Right ventricle myocardium superior (tissue), 1 donor: ENCODE measurements at regions of chr1 and their contacts with region 1.

Region 1: GRCh38 chr1:24415334-24415909 is at the start of gene NIPAL3:
- DNase-seq: peak; percentile 98
- ATAC-seq: peak; percentile 95
- total RNA-seq, gene NIPAL3: 31.8 TPM

Region 2: GRCh38 chr1:24119859-24120756 is 295.3 kb before region 1 on chr1:
- intact Hi-C with region 1: no loop called
- DNase-seq: peak; percentile 71
- ATAC-seq: peak; percentile 87

Region 3: DNA sequence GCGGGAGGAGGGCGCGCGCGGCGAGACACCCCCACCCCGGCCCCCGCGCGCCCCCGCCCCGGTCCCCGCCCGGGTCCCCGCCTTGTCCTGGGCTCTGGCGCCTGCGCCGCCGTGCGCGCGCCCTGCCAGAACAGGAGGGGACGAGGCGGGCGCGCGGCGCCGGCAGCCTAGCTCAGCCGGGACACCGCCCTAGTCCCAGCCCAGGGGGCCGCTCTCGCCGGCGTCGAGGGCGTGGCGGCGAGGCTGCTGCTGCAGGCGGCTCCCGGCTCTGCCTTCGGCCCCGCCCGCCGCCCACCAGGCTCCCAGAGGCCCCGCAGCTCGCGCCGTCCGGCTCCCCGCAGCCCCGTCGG is 87.3 kb after region 1 on chr1 and contains the start of gene RCAN3:
- intact Hi-C with region 1: loop called (anchors 5 kb)
- DNase-seq: peak; percentile 93
- ATAC-seq: peak; percentile 98
- total RNA-seq, gene RCAN3: 6.5 TPM